ENCODE measurements at regions of chr5 and their contacts with region 1.

Region 1: DNA sequence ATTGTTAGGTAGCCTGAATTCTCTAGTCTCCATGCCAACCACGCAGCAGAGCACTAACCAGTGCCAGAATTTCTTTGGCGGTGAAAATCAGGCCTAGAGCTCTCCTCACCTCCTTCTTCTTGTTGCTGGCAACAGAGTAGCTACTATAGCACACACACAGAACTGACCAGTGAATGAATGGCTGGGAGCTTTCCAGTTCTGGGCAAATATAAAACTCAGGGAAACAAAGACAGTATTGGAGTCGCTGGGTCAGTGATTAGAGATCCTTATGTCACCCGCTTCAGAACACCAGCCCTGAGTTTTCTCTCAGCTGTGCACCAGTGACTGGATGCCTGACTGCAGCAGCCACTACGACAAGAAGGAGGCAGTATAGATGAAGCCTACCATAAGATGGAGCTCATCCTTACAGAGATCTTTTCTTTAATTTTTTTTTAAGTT is 26.9 kb upstream of the FEM1C start:
- DNase-seq: no peak
- H3K4me3 ChIP-seq: no peak overlapping the region
- H3K27ac ChIP-seq: peak overlapping the region in 2 of 4 donors; percentile 10 to 23
- H3K4me1 ChIP-seq: no peaks in the 10 kb centered on the region
- H3K27me3 ChIP-seq: no peaks in the 10 kb centered on the region
- CTCF ChIP-seq: peak in 1 of 4 experiments; percentile 8
- EP300 ChIP-seq: no peak
- POLR2A ChIP-seq: no peak

Region 2: GRCh38 chr5:115194676-115195075 is 376.8 kb before region 1 on chr5:
- intact Hi-C with region 1: no loop called
- DNase-seq: no peak
- H3K4me3 ChIP-seq: no peak overlapping the region
- H3K27ac ChIP-seq: no peak overlapping the region
- H3K4me1 ChIP-seq: no peaks in the 10 kb centered on the region
- H3K27me3 ChIP-seq: no peaks in the 10 kb centered on the region
- CTCF ChIP-seq: no peak
- EP300 ChIP-seq: no peak
- POLR2A ChIP-seq: no peak

Region 3: GRCh38 chr5:115309751-115310370 is 261.6 kb before region 1 on chr5:
- intact Hi-C with region 1: loop called (anchors 2 kb)
- DNase-seq: no peak
- H3K4me3 ChIP-seq: no peak overlapping the region
- H3K27ac ChIP-seq: no peak overlapping the region
- H3K4me1 ChIP-seq: no peaks in the 10 kb centered on the region
- H3K27me3 ChIP-seq: peaks cover 0 to 20% (median 0%) of the 10 kb centered on the region in 3 donors
- CTCF ChIP-seq: peak; percentile 23 to 61 (median 56)
- EP300 ChIP-seq: no peak
- POLR2A ChIP-seq: no peak

Region 4: DNA sequence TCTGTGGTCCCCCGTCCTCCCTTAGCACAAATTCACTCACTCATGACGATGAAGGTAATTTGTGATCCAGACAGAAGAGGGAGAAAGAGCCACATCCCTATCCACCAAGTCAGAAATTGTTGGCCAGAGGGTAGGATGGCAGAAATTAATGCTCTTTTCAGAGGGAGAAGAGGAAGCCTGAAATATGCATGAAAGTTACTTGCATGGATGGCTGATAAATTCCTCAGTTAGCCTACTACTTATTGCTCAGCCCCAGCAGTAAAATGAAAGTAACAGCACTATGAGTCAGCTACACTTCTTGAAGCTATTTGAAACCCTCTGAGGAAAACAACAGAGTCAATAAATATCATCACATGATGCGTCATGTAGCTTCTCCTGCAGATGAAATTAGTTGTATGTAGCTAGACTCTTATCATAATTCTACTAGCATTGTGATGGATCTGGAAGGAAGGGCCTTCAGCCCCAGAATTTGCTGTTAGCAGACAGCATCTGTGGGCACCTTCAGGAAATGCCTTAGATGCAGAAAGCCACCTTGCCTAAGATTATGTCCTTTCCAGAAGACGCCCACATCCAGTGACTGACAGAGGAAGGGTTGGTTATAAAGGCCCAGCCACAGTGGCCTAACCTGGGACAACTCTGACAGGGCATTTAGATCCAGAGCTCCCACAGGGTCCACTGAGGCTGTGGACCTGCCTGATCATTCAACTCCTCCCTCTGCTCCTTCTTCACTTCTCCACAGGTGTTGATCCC is 193.8 kb before region 1 on chr5:
- intact Hi-C with region 1: loop called (anchors 5 kb)
- DNase-seq: no peak
- H3K4me3 ChIP-seq: no peak overlapping the region
- H3K27ac ChIP-seq: peak overlapping the region in 2 of 4 donors; percentile 28 to 33
- H3K4me1 ChIP-seq: peaks cover 0 to 9% (median 6%) of the 10 kb centered on the region in 4 donors
- H3K27me3 ChIP-seq: no peaks in the 10 kb centered on the region
- CTCF ChIP-seq: peak in 3 of 4 experiments; percentile 18 to 37 (median 26)
- EP300 ChIP-seq: no peak
- POLR2A ChIP-seq: no peak

Measured in sigmoid colon (tissue), 7 donors.